Activated CD4-positive, alpha-beta T cell treated with anti-CD3 and anti-CD28 coated beads for 36 hours (primary cell): ENCODE measurements at regions of chr14 and their contacts with region 1.

Region 1: GRCh38 chr14:71555654-71556559 is 376.3 kb upstream of the RGS6 start:
- DNase-seq: peak; percentile 81
- ATAC-seq: peak; percentile 86
- H3K4me3 Mint-ChIP-seq: peak overlapping the region; percentile 50
- H3K27ac Mint-ChIP-seq: peak overlapping the region; percentile 98
- H3K4me1 Mint-ChIP-seq: peaks cover 76% of the 10 kb centered on the region
- H3K27me3 Mint-ChIP-seq: no peaks in the 10 kb centered on the region

Region 2: DNA sequence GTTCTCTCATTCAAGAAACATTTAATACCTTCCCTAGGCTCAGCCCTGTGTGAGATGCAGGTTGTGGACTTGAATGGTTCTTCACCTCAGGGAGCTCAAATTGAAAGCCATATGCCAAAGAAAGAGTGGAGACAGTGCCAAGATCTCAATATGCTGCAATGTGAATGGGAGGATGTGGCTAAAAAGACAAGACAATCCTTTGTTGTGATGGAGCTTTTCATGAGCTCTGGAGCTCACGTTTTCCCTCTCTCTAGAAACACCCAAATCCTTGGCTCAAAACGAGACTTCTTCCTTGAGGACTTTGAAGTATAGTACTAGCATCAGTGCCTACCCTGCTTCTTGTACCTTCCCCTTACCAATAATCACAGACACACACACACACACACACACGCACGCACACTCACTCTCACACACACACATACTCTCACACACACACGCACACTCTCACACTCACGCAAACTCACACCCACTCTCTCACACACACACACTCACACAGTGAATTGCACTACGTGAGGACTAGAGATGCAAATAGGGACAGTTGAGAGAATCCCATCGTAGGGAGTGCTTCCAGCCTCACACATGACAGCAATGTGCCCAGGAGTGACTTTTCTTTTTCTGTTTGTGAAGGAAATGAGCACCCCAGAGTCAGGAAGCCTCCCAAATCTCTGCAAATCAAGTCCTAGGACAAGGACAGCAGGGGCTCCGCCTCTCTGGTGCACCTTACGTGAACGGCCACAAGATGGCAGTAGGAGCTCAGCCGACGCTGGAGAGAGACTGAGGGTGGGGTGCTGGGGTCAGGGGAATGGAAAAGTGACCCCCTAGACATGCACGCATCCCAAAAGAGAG is 417.2 kb before region 1 on chr14:
- CTCF ChIA-PET with region 1: no interaction called
- POLR2A ChIA-PET with region 1: interaction called, 9 read pairs
- intact Hi-C with region 1: loop called (anchors 1 kb)
- DNase-seq: peak; percentile 73
- ATAC-seq: peak; percentile 17
- H3K4me3 Mint-ChIP-seq: no peak overlapping the region
- H3K27ac Mint-ChIP-seq: no peak overlapping the region
- H3K4me1 Mint-ChIP-seq: peaks cover 28% of the 10 kb centered on the region
- H3K27me3 Mint-ChIP-seq: peaks cover 3% of the 10 kb centered on the region

Region 3: GRCh38 chr14:71290960-71291466 is 264.9 kb before region 1 on chr14:
- CTCF ChIA-PET with region 1: no interaction called
- POLR2A ChIA-PET with region 1: no interaction called
- intact Hi-C with region 1: loop called (anchors 1 kb)
- DNase-seq: peak; percentile 72
- ATAC-seq: peak; percentile 100
- H3K4me3 Mint-ChIP-seq: no peak overlapping the region
- H3K27ac Mint-ChIP-seq: peak overlapping the region; percentile 45
- H3K4me1 Mint-ChIP-seq: peaks cover 18% of the 10 kb centered on the region
- H3K27me3 Mint-ChIP-seq: peaks cover 2% of the 10 kb centered on the region

Region 4: GRCh38 chr14:71410578-71411284 is 145.2 kb before region 1 on chr14:
- CTCF ChIA-PET with region 1: no interaction called
- POLR2A ChIA-PET with region 1: no interaction called
- intact Hi-C with region 1: loop called (anchors 1 kb)
- DNase-seq: no peak
- ATAC-seq: peak; percentile 80
- H3K4me3 Mint-ChIP-seq: no peak overlapping the region
- H3K27ac Mint-ChIP-seq: peak overlapping the region; percentile 73
- H3K4me1 Mint-ChIP-seq: peaks cover 41% of the 10 kb centered on the region
- H3K27me3 Mint-ChIP-seq: no peaks in the 10 kb centered on the region

Region 5: GRCh38 chr14:71523630-71524319 is 32.1 kb before region 1 on chr14:
- CTCF ChIA-PET with region 1: interaction called, 3 read pairs
- POLR2A ChIA-PET with region 1: interaction called, 9 read pairs
- intact Hi-C with region 1: loop called (anchors 1 to 5 kb)
- DNase-seq: no peak
- ATAC-seq: peak; percentile 87
- H3K4me3 Mint-ChIP-seq: no peak overlapping the region
- H3K27ac Mint-ChIP-seq: peak overlapping the region; percentile 33
- H3K4me1 Mint-ChIP-seq: peaks cover 15% of the 10 kb centered on the region
- H3K27me3 Mint-ChIP-seq: no peaks in the 10 kb centered on the region